Posterior cingulate gyrus (tissue), 11 donors: ENCODE measurements at regions of chr1 and their contacts with region 1.

Region 1: GRCh38 chr1:247119600-247120407 is 15.6 kb upstream of the ZNF669 start:
- DNase-seq: peak in 1 of 10 donors; percentile 41

Region 2: GRCh38 chr1:247165674-247166073 is 45.9 kb after region 1 on chr1:
- intact Hi-C with region 1: loop called (anchors 5 kb)
- DNase-seq: no peak